ENCODE measurements at regions of chr1 and their contacts with region 1.

Region 1: DNA sequence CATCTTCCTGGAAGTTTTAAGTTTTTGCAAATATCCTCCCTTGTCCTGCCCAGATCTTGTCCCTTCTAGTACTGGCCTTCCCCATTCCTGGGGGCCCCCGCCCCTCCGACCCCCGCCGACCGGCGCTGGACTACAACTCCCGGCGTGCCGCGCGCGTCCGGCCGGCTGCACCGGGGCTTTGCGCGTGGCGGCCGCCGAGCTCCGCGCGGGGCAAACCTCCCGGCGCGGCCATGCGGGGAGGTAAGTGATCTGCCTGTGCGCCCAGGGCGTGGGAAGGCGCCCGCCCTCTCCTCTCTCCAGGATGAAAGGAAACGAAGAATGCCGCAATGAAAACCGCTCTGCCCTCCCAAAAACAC is 3.2 kb upstream of the SAMD13 start:
- DNase-seq: peak; percentile 35 to 54
- ATAC-seq: peak; percentile 72 to 74
- H3K4me3 ChIP-seq: peak overlapping the region; percentile 79 to 94 (median 81)
- H3K27ac ChIP-seq: peak overlapping the region; percentile 88 to 95 (median 93)
- H3K4me1 ChIP-seq: peaks cover 26 to 37% of the 10 kb centered on the region in 2 donors
- H3K27me3 ChIP-seq: no peaks in the 10 kb centered on the region
- CTCF ChIP-seq: no peak
- POLR2A ChIP-seq: peak; percentile 53 to 77

Region 2: GRCh38 chr1:83998498-83999315 is 299.6 kb before region 1 on chr1 and contains the start of gene TTLL7:
- in situ Hi-C with region 1: no loop called
- intact Hi-C with region 1: loop called (anchors 10 kb)
- DNase-seq: peak; percentile 51 to 79
- ATAC-seq: peak; percentile 92 to 93
- H3K4me3 ChIP-seq: peak within 1 kb of the TSS; percentile 65 to 93 (median 89)
- H3K27ac ChIP-seq: peak within 1 kb of the TSS; percentile 81 to 90 (median 86)
- H3K4me1 ChIP-seq: peaks cover 13 to 17% of the 10 kb centered on the region in 2 donors
- H3K27me3 ChIP-seq: no peaks in the 10 kb centered on the region
- CTCF ChIP-seq: no peak
- POLR2A ChIP-seq: peak; percentile 56 to 74
- total RNA-seq, gene TTLL7: 8.2 to 22.9 (median 12.3) TPM

Region 3: GRCh38 chr1:84143796-84144565 is 154.3 kb before region 1 on chr1 and contains the start of gene PRKACB:
- in situ Hi-C with region 1: no loop called
- intact Hi-C with region 1: loop called (anchors 10 kb)
- DNase-seq: no peak
- ATAC-seq: no peak
- H3K4me3 ChIP-seq: peak within 1 kb of the TSS in 1 of 4 donors; percentile 6
- H3K27ac ChIP-seq: no peak within 1 kb of the TSS
- H3K4me1 ChIP-seq: no peaks in the 10 kb centered on the region
- H3K27me3 ChIP-seq: no peaks in the 10 kb centered on the region
- CTCF ChIP-seq: no peak
- POLR2A ChIP-seq: peak in 1 of 2 donors; percentile 25
- total RNA-seq, gene PRKACB: 4.2 to 12.4 (median 7.0) TPM

Region 4: GRCh38 chr1:84253891-84254290 is 44.4 kb before region 1 on chr1:
- in situ Hi-C with region 1: no loop called
- intact Hi-C with region 1: loop called (anchors 2 kb)
- DNase-seq: peak; percentile 61 to 83
- ATAC-seq: peak; percentile 99 to 100
- H3K4me3 ChIP-seq: no peak overlapping the region
- H3K27ac ChIP-seq: peak overlapping the region; percentile 62 to 70 (median 66)
- H3K4me1 ChIP-seq: peaks cover 6 to 8% of the 10 kb centered on the region in 2 donors
- H3K27me3 ChIP-seq: no peaks in the 10 kb centered on the region
- CTCF ChIP-seq: no peak
- POLR2A ChIP-seq: no peak

Region 5: DNA sequence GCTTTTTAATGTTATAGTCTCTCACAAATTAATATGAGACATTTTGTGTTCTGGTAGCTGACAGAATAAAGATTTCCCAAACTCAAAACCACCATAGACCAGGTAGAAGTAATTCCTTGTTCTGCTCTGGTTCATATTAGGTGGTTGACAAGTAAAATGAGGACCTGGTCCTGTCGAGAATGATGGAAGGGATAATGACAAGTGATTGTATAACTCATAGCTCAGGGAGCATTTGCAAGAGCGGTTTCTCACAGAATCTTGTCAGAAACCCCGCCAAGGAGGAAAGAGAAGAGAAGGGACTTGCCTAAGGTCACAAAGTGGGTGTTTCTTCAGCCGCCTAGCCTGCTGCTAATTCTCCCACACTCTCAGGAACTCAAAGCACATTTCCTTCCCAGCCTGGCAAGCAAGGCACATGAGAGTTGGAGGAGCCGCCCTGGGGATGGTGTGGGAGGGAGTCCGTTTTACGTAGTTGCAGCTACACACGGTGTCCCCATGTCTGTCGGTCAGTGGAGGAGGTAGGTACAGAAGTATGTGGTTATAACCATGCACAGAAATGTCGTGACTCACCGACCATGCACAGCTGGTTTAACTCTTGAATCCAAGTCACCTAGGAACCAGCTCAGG is 49.7 kb after region 1 on chr1:
- in situ Hi-C with region 1: no loop called
- intact Hi-C with region 1: loop called (anchors 2 kb)
- DNase-seq: no peak
- ATAC-seq: no peak
- H3K4me3 ChIP-seq: no peak overlapping the region
- H3K27ac ChIP-seq: peak overlapping the region in 3 of 4 donors; percentile 5 to 38 (median 35)
- H3K4me1 ChIP-seq: peaks cover 7 to 26% of the 10 kb centered on the region in 2 donors
- H3K27me3 ChIP-seq: no peaks in the 10 kb centered on the region
- CTCF ChIP-seq: no peak
- POLR2A ChIP-seq: no peak

Region 6: DNA sequence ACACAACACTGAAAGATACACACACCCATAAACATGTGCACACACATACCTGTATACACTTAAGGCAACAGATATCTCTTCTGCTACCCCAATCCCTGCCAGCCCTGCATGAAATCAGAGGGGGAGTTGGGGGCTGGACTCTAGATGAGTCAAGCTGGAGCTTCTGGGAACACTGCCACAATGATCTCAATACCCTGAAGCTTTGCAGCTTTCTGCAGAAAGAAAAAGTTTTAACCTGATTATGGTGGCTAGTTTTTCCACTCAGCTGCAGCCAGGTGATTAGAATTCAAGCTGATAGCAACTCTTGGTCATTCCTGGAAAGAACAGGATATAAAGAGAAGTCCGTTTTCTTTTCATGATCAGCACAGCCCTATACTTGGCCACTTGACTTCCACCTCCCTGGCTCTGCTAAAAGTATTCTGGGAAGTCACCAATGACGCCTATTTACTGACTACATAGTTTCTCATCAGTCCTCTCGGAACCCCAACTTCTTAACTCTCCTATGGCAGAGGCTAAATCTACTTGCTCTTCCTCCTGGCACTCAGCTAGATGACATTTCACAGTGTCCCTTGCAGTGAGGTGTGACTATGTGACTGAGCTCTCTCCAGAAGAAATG is 79.3 kb after region 1 on chr1:
- in situ Hi-C with region 1: loop called in 1 of 4 experiments (anchors 10 kb)
- intact Hi-C with region 1: loop called (anchors 2 kb)
- DNase-seq: peak in 1 of 2 donors; percentile 23
- ATAC-seq: no peak
- H3K4me3 ChIP-seq: no peak overlapping the region
- H3K27ac ChIP-seq: peak overlapping the region; percentile 74 to 87 (median 77)
- H3K4me1 ChIP-seq: peaks cover 43 to 54% of the 10 kb centered on the region in 2 donors
- H3K27me3 ChIP-seq: no peaks in the 10 kb centered on the region
- CTCF ChIP-seq: no peak
- POLR2A ChIP-seq: no peak

Region 7: GRCh38 chr1:84478876-84479868 is 180.9 kb after region 1 on chr1 and contains the start of gene RPF1:
- in situ Hi-C with region 1: no loop called
- intact Hi-C with region 1: loop called (anchors 5 kb)
- DNase-seq: peak; percentile 54 to 60
- ATAC-seq: peak; percentile 97 to 99
- H3K4me3 ChIP-seq: peak within 1 kb of the TSS; percentile 66 to 95 (median 84)
- H3K27ac ChIP-seq: peak within 1 kb of the TSS; percentile 81 to 92 (median 88)
- H3K4me1 ChIP-seq: peaks cover 24 to 26% of the 10 kb centered on the region in 2 donors
- H3K27me3 ChIP-seq: peaks cover 0 to 22% (median 20%) of the 10 kb centered on the region in 3 donors
- CTCF ChIP-seq: no peak
- POLR2A ChIP-seq: peak; percentile 66 to 73
- total RNA-seq, gene RPF1: 35.9 to 61.9 (median 52.4) TPM

Measured in gastrocnemius medialis (tissue), 4 donors.